Heart right ventricle (tissue), 16 donors: ENCODE measurements at regions of chr12 and their contacts with region 1.

Region 1: DNA sequence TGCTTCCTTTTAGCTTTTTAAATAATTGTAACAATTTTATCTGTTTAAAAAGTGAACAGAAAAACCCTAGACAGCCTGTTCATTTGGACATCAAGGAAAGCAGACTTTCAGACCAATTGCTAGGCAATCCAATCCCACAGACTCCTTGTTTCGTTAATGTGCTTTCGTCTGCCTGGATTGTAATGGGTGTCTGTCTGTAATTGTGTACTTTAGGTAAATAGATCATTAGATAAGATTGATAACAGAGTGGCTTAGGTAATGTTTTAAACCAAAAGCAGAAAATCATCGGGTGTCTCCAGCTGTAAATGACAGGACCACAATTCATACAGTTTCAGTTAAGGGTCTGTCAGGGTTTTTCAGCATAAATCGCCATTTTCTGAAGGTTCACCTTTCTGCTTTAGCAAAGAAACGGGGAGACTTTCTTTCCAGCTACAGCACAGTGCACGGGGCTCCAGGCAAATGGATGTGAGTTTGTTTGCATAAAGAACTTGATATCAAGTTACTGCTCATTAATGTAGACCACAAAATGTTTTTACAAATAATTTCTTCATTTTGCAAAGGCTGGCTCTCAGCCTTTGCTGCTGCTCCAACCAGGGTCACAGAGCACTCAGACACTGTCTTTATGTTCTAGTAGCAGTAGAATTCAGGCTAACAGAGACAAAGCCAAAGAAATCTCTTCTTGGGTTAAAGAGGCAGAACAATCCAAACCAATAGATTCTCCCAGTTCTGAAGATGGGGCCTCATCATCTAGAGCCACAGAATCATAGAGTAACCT is 19.8 kb downstream of the CCDC60 start:
- DNase-seq: no peak
- ATAC-seq: no peak
- H3K4me3 ChIP-seq: no peak overlapping the region
- H3K27ac ChIP-seq: no peak overlapping the region
- H3K4me1 ChIP-seq: no peaks in the 10 kb centered on the region
- H3K27me3 ChIP-seq: no peaks in the 10 kb centered on the region
- CTCF ChIP-seq: no peak

Region 2: GRCh38 chr12:118312578-118312977 is 1041.8 kb before region 1 on chr12:
- intact Hi-C with region 1: loop called in 1 of 10 experiments (anchors 5 kb)
- DNase-seq: no peak
- ATAC-seq: peak in 1 of 8 donors; percentile 28
- H3K4me3 ChIP-seq: no peak overlapping the region
- H3K27ac ChIP-seq: peak overlapping the region in 1 of 10 donors; percentile 13
- H3K4me1 ChIP-seq: peaks cover 0 to 38% (median 14%) of the 10 kb centered on the region in 9 donors
- H3K27me3 ChIP-seq: no peaks in the 10 kb centered on the region
- CTCF ChIP-seq: no peak